ENCODE measurements at regions of chr1 and their contacts with region 1.

Region 1: GRCh38 chr1:117541003-117541402 is 64.8 kb upstream of the TENT5C start:
- DNase-seq: peak; percentile 85 to 86
- H3K4me3 ChIP-seq: no peak overlapping the region
- H3K27ac ChIP-seq: peak overlapping the region; percentile 50 to 66
- H3K4me1 ChIP-seq: no peaks in the 10 kb centered on the region
- H3K27me3 ChIP-seq: no peaks in the 10 kb centered on the region
- CTCF ChIP-seq: no peak
- POLR2A ChIP-seq: no peak

Region 2: GRCh38 chr1:116538544-116538943 is 1002.5 kb before region 1 on chr1:
- intact Hi-C with region 1: loop called (anchors 5 kb)
- DNase-seq: no peak
- H3K4me3 ChIP-seq: no peak overlapping the region
- H3K27ac ChIP-seq: no peak overlapping the region
- H3K4me1 ChIP-seq: no peaks in the 10 kb centered on the region
- H3K27me3 ChIP-seq: no peaks in the 10 kb centered on the region
- CTCF ChIP-seq: no peak
- POLR2A ChIP-seq: no peak

Region 3: DNA sequence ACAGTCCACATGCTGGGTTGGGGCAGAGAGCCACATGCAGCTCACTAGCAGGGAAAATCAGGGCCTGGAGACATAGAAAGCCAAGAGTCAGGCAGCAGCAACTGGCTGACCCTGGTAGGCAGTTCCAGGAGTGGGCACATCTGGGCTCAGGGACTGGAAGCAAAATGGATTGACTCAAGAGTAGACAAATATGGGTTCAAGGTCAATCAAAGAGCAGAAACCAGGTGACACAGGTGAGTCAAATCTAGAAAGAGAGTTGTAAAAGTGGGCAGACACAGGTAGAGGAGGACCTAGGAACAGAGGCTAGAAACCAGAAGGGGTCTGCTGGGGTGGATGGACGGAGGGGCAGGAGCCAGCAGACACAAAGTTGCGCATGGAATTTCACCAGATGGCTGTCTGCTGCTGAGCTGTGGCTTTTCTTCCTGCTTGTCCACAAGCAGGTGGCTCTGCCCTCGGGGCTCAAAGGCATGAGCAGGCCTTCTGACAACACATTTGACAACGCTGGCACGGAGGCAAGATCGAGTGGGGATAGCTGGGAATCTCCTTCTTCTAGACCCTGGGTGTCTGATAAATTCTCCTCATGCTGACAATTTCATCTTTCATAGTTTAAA is 832.6 kb before region 1 on chr1:
- intact Hi-C with region 1: no loop called
- DNase-seq: peak; percentile 62 to 89
- H3K4me3 ChIP-seq: no peak overlapping the region
- H3K27ac ChIP-seq: no peak overlapping the region
- H3K4me1 ChIP-seq: no peaks in the 10 kb centered on the region
- H3K27me3 ChIP-seq: no peaks in the 10 kb centered on the region
- CTCF ChIP-seq: no peak
- POLR2A ChIP-seq: no peak

Region 4: DNA sequence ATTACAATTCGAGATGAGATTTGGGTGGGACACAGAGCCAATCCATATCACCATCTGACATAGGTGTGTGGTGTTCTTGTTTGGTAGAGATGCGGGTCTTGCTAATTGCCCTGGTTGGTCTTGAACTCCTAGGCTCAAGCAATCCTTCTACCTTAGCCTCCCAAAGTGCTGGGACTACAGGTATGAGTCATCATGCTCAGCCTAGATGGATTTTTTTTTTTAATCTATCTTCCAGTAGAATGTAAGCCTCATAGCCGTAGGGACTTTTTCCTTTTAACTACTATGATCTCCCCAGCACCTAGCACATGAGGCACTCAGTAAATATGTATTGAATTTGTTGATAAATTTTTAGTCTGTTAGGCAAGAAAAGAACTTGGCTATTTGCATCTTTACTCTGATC is 29.7 kb before region 1 on chr1:
- intact Hi-C with region 1: no loop called
- DNase-seq: no peak
- H3K4me3 ChIP-seq: no peak overlapping the region
- H3K27ac ChIP-seq: no peak overlapping the region
- H3K4me1 ChIP-seq: no peaks in the 10 kb centered on the region
- H3K27me3 ChIP-seq: no peaks in the 10 kb centered on the region
- CTCF ChIP-seq: no peak
- POLR2A ChIP-seq: no peak